Head of caudate nucleus (tissue), 42 donors: ENCODE measurements at regions of chr12 and their contacts with region 1.

Region 1: GRCh38 chr12:94553130-94553519 is 93.5 kb upstream of the CEP83 start:
- DNase-seq: peak in 40 of 42 donors; percentile 10 to 85 (median 58)

Region 2: GRCh38 chr12:94427501-94428381 is 125.4 kb before region 1 on chr12:
- intact Hi-C with region 1: no loop called
- DNase-seq: peak in 5 of 42 donors; percentile 5 to 30 (median 11)

Region 3: DNA sequence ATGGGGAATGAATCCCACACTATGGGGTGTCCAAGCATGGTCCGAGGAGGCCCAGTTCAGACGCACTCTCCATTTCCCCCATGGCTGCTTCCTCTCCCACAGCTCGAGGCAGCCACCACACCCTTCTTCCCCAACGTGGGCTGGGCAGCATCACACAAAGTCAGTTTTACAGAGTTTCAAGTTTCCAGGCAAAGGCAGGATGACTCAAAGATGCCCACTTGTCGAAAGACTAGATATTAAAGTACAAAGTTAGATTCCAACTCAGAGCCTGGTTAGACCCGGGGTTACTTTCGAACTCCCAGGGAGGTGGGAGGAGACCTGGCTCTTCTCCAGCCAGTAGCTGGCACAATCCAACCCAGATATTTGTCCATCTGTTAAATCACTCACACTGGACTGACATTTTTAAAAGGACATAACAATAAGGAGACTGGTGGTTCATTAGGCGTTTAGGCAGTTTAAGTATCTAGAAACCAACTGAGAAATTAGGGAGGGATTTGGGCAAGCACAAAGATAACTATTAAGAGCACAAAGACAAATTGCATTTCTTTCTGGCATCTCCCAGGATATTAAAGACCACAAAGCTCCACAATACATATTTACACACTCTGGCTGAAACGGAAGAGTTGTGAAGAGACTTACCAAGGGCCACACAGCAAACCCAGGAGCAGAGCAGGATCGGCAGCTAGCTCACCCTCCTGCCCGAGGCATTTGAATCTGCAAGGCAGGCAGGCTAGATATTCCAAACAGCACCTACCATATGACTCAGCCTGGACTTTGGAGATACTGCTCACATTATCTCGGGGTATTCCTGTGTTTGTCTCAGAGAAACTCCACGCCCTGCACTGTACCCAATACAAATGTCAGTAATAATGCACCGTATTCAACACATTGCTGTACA is 62.4 kb after region 1 on chr12:
- intact Hi-C with region 1: loop called (anchors 10 kb)
- DNase-seq: peak in 38 of 42 donors; percentile 16 to 84 (median 58)

Region 4: DNA sequence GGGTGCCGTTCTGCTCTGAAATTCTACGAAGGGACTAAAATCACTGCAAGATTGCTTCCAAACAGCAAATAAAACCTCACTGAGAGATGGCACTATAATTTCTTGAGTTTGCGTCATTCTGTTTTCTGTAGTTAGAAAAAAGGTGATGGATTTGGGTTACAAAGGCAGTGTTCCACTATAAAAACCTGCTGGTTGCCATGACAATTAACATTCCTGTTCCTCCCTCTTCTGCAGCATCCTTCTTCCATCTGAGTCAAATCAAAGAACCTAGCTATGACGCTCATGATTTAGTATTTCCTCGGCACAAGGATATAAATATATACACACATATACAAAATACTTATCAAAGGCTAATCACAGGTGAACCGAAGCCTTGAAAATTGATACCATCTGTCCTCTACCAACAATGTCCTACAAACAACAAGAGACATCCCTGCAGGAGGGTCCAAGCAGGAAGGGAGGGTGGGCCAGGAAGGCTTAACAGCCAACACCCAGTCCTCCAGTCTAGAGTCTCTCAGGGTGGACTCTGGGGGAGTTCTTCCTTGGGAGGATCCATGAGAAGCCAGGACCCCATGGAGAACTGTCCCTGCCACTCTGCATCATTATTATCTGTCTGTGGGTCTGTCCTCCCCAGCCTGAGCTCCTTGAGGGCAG is 75.8 kb after region 1 on chr12:
- intact Hi-C with region 1: no loop called
- DNase-seq: peak in 4 of 42 donors; percentile 28 to 40 (median 34)

Region 5: DNA sequence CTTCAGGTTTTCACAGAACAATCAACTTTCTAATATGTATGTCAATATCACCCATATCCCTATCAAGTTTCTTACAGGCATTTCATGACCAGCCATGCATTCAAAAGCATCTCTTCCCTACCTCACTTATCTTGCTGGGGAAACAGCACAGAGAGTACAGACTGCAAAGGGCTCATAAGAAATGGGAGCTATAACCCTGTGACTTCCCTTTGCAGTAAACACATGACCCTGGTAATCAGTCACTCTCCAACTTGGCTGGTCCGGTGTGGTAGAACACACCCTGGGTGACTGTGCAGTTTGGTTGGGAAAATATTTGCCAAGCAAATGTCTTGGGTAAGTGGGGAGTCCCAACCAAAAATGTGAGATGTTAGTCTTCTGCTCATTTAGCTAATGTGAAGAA is 146.7 kb after region 1 on chr12:
- intact Hi-C with region 1: no loop called
- DNase-seq: no peak